ENCODE measurements at regions of chrX and their contacts with region 1.

Region 1: GRCh38 chrX:129522184-129523078 is 859 bp downstream of the SMARCA1 start:
- DNase-seq: peak in 1 of 2 donors; percentile 72
- H3K4me3 ChIP-seq: peak overlapping the region; percentile 62 to 86
- H3K27ac ChIP-seq: peak overlapping the region; percentile 87 to 91
- H3K4me1 ChIP-seq: no peaks in the 10 kb centered on the region
- H3K27me3 ChIP-seq: no peaks in the 10 kb centered on the region
- CTCF ChIP-seq: no peak

Region 2: DNA sequence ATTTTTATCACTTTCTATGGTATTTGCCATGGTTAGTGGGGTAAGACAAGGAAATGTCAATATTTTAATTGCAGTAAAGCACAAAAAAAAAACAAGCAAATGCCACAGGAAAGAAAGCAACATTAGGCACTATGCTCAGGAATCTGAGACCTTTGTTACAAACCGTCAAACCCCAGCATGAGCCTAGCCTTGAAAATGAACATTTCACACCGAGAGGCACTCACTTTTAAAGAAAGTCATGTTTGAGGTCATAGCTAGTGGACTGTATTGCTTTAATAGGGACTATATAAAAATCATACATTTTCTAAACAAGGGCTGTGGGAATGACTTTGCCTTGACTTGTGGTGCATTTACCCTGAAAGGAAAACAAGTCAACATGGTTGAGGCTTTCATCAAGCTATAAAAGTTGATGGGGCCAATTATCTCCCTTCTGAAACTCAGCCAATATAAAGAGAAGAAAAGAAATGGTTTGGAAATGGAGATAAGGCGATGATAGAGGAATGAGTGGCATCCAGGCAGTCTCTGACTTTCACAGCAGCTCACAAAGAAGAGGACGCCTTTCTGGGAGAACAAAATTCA is 117.9 kb before region 1 on chrX:
- intact Hi-C with region 1: no loop called
- DNase-seq: no peak
- H3K4me3 ChIP-seq: no peak overlapping the region
- H3K27ac ChIP-seq: no peak overlapping the region
- H3K4me1 ChIP-seq: no peaks in the 10 kb centered on the region
- H3K27me3 ChIP-seq: no peaks in the 10 kb centered on the region
- CTCF ChIP-seq: no peak

Region 3: GRCh38 chrX:129540068-129540653 is 17.7 kb after region 1 on chrX and contains the start of gene OCRL:
- intact Hi-C with region 1: loop called (anchors 1 kb)
- DNase-seq: peak in 1 of 2 donors; percentile 79
- H3K4me3 ChIP-seq: peak within 1 kb of the TSS; percentile 64 to 79
- H3K27ac ChIP-seq: peak within 1 kb of the TSS; percentile 81
- H3K4me1 ChIP-seq: no peaks in the 10 kb centered on the region
- H3K27me3 ChIP-seq: no peaks in the 10 kb centered on the region
- CTCF ChIP-seq: peak; percentile 69 to 81 (median 80)
- total RNA-seq, gene OCRL: 22.4 TPM